ENCODE measurements at regions of chr5 and their contacts with region 1.

Region 1: DNA sequence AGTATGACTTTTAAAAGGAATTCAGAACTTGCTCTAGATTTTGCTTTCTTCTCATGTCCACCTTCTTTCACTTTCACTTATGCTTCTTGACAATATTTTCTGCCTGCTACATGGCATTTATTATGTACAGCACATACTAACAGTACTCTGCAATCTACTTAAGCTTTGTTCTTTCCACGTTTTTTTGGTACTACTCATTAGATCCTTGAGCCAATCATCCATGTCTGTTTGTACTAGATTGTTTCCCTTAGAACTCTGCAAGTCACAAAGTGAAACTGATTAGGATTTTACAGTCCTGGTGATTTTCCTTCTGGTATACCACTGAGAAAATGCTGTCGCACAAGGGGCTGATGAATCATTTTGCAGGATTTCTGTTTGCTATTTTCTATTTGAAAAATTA is 78.3 kb downstream of the PARP8 start:
- DNase-seq: peak; percentile 27
- ATAC-seq: peak; percentile 76
- H3K4me3 ChIP-seq: peak overlapping the region; percentile 54
- H3K27ac ChIP-seq: peak overlapping the region; percentile 65
- H3K4me1 ChIP-seq: peaks cover 6% of the 10 kb centered on the region; the same call in 1 of the 2 replicates
- H3K27me3 ChIP-seq: no peaks in the 10 kb centered on the region
- CTCF ChIP-seq: no peak
- EP300 ChIP-seq: no peak
- POLR2A ChIP-seq: no peak
- RAD21 ChIP-seq: no peak

Region 2: DNA sequence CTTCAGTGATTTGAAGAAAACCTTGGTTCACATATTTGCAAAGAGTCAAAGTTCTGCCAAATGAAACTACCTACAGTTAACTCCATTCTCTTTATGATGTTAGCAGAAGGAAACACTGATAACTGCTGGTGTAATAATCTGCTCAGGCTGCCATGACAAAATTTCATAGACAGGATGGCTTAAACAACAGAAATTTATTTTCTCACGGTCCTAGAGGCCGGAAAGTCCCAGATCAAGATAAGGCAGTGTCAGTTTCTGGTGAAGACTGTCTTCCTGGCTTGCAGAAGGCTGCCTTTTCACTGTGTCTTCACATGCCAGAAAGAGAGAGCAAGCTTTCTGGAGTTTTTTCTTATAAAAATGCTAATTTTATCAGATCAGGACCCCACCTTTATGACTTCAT is 180.7 kb before region 1 on chr5:
- CTCF ChIA-PET with region 1: no interaction called
- POLR2A ChIA-PET with region 1: no interaction called
- RAD21 ChIA-PET with region 1: no interaction called
- SMC1A ChIA-PET with region 1: no interaction called
- in situ Hi-C with region 1: no loop called
- intact Hi-C with region 1: loop called (anchors 10 kb)
- DNase-seq: peak; percentile 45
- ATAC-seq: peak; percentile 96
- H3K4me3 ChIP-seq: no peak overlapping the region
- H3K27ac ChIP-seq: peak overlapping the region; percentile 51
- H3K4me1 ChIP-seq: no peaks in the 10 kb centered on the region
- H3K27me3 ChIP-seq: no peaks in the 10 kb centered on the region
- CTCF ChIP-seq: no peak
- EP300 ChIP-seq: no peak
- POLR2A ChIP-seq: no peak
- RAD21 ChIP-seq: no peak

Region 3: GRCh38 chr5:50697421-50698138 is 47.2 kb before region 1 on chr5:
- CTCF ChIA-PET with region 1: interaction called, 3 read pairs
- POLR2A ChIA-PET with region 1: no interaction called
- RAD21 ChIA-PET with region 1: interaction called, 15 read pairs
- SMC1A ChIA-PET with region 1: interaction called, 8 read pairs
- in situ Hi-C with region 1: no loop called
- intact Hi-C with region 1: loop called (anchors 10 kb)
- DNase-seq: peak; percentile 46
- ATAC-seq: peak; percentile 86
- H3K4me3 ChIP-seq: no peak overlapping the region
- H3K27ac ChIP-seq: no peak overlapping the region; the same call in 1 of the 2 replicates
- H3K4me1 ChIP-seq: peaks cover 11% of the 10 kb centered on the region
- H3K27me3 ChIP-seq: no peaks in the 10 kb centered on the region
- CTCF ChIP-seq: no peak
- EP300 ChIP-seq: peak in 1 of 2 experiments; percentile 61; a peak in 1 of 4 replicates
- POLR2A ChIP-seq: no peak
- RAD21 ChIP-seq: no peak

Region 4: GRCh38 chr5:50711273-50711672 is 33.5 kb before region 1 on chr5:
- CTCF ChIA-PET with region 1: interaction called, 4 read pairs
- POLR2A ChIA-PET with region 1: interaction called, 3 read pairs
- RAD21 ChIA-PET with region 1: interaction called, 11 read pairs
- SMC1A ChIA-PET with region 1: interaction called, 15 read pairs
- in situ Hi-C with region 1: no loop called
- intact Hi-C with region 1: loop called (anchors 5 kb)
- DNase-seq: peak; percentile 87
- ATAC-seq: peak; percentile 95
- H3K4me3 ChIP-seq: peak overlapping the region; percentile 37
- H3K27ac ChIP-seq: peak overlapping the region; percentile 70
- H3K4me1 ChIP-seq: peaks cover 20% of the 10 kb centered on the region
- H3K27me3 ChIP-seq: no peaks in the 10 kb centered on the region
- CTCF ChIP-seq: no peak
- EP300 ChIP-seq: no peak; a peak in 1 of 4 replicates
- POLR2A ChIP-seq: no peak
- RAD21 ChIP-seq: no peak

Region 5: GRCh38 chr5:50717651-50718050 is 27.1 kb before region 1 on chr5:
- CTCF ChIA-PET with region 1: interaction called, 4 read pairs
- POLR2A ChIA-PET with region 1: interaction called, 3 read pairs
- RAD21 ChIA-PET with region 1: interaction called, 3 read pairs
- SMC1A ChIA-PET with region 1: interaction called, 15 read pairs
- in situ Hi-C with region 1: no loop called
- intact Hi-C with region 1: loop called (anchors 5 kb)
- DNase-seq: no peak
- ATAC-seq: peak; percentile 83
- H3K4me3 ChIP-seq: no peak overlapping the region
- H3K27ac ChIP-seq: no peak overlapping the region
- H3K4me1 ChIP-seq: peaks cover 7% of the 10 kb centered on the region
- H3K27me3 ChIP-seq: no peaks in the 10 kb centered on the region
- CTCF ChIP-seq: no peak
- EP300 ChIP-seq: no peak
- POLR2A ChIP-seq: no peak
- RAD21 ChIP-seq: no peak

Region 6: GRCh38 chr5:50724262-50724661 is 20.5 kb before region 1 on chr5:
- CTCF ChIA-PET with region 1: interaction called, 5 read pairs
- POLR2A ChIA-PET with region 1: interaction called, 3 read pairs
- RAD21 ChIA-PET with region 1: interaction called, 7 read pairs
- SMC1A ChIA-PET with region 1: interaction called, 10 read pairs
- in situ Hi-C with region 1: no loop called
- intact Hi-C with region 1: no loop called
- DNase-seq: no peak
- ATAC-seq: no peak
- H3K4me3 ChIP-seq: no peak overlapping the region
- H3K27ac ChIP-seq: no peak overlapping the region
- H3K4me1 ChIP-seq: no peaks in the 10 kb centered on the region
- H3K27me3 ChIP-seq: no peaks in the 10 kb centered on the region
- CTCF ChIP-seq: no peak
- EP300 ChIP-seq: no peak
- POLR2A ChIP-seq: no peak
- RAD21 ChIP-seq: no peak

Region 7: DNA sequence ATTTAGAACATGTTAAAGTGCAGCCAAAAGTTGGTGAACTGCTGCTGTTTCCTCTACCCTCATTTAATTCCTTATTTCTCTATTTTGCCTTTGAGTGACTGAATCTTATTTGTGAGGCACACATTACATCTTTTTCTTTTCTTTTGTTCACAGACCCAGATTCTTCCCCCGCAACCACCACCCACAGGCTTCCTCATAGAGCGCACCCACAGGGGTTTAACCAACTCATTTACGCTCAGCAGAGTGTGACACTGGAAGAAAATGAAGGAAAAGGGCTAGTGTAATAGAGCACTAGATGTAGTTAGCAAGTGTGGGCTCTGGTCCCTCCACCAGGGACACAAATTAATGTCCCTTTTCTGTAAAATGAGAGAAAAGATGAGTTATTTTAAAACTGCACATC is 122.4 kb after region 1 on chr5:
- CTCF ChIA-PET with region 1: no interaction called
- POLR2A ChIA-PET with region 1: no interaction called
- RAD21 ChIA-PET with region 1: no interaction called
- SMC1A ChIA-PET with region 1: no interaction called
- in situ Hi-C with region 1: no loop called
- intact Hi-C with region 1: no loop called
- DNase-seq: no peak
- ATAC-seq: no peak
- H3K4me3 ChIP-seq: no peak overlapping the region
- H3K27ac ChIP-seq: no peak overlapping the region
- H3K4me1 ChIP-seq: no peaks in the 10 kb centered on the region
- H3K27me3 ChIP-seq: no peaks in the 10 kb centered on the region
- CTCF ChIP-seq: no peak
- EP300 ChIP-seq: no peak
- POLR2A ChIP-seq: no peak
- RAD21 ChIP-seq: no peak

Measured in GM12878 (cell line).